ENCODE measurements at regions of chr10 and their contacts with region 1.

Region 1: GRCh38 chr10:79068562-79069324 is at the start of gene ZMIZ1:
- DNase-seq: peak; percentile 77
- H3K4me3 Mint-ChIP-seq: peak within 1 kb of the TSS; percentile 91
- H3K27ac Mint-ChIP-seq: peak within 1 kb of the TSS; percentile 86
- H3K4me1 Mint-ChIP-seq: peaks cover 43% of the 10 kb centered on the region
- H3K27me3 Mint-ChIP-seq: peaks cover 16% of the 10 kb centered on the region
- total RNA-seq, gene ZMIZ1: 67.6 and 67.8 TPM in 2 replicates

Region 2: GRCh38 chr10:78047314-78047891 is 1021.3 kb before region 1 on chr10:
- intact Hi-C with region 1: loop called (anchors 5 kb)
- DNase-seq: peak; percentile 61
- H3K4me3 Mint-ChIP-seq: no peak overlapping the region
- H3K27ac Mint-ChIP-seq: no peak overlapping the region
- H3K4me1 Mint-ChIP-seq: peaks cover 30% of the 10 kb centered on the region
- H3K27me3 Mint-ChIP-seq: no peaks in the 10 kb centered on the region

Region 3: DNA sequence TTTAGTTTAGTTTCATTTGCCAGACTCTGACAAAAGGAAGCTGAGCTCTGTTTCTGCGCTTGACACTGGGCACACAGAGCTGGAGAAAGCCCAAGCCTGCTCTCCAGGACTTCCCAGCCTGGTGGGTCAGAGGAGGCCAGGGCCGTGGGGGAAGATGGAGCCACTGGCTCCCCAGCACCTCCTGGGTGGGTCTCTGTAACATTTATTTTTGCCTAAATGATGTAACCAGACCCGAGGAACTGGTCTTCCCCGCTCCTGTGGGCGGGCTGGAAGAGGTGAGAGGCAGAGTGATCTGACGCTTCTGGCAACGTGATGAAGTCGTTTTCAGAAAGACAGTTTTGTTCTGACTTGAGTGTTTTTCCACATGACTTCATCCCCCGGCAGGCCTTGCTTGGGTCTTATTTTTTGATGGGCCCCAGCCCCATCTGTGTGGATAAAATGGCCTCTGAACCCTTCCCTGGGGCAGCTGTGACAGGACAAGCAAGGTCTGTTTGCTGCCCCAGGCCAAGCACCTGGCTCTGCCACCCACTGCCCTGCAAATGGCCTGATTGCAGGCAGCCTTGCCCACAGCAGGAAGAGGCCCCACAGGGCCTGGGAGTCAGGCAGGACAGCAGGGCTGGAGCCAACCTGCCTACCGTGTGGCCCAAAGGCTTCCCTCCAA is 305.0 kb before region 1 on chr10:
- intact Hi-C with region 1: loop called (anchors 1 kb)
- DNase-seq: no peak
- H3K4me3 Mint-ChIP-seq: peak overlapping the region; percentile 3
- H3K27ac Mint-ChIP-seq: peak overlapping the region; percentile 85
- H3K4me1 Mint-ChIP-seq: peaks cover 27% of the 10 kb centered on the region
- H3K27me3 Mint-ChIP-seq: no peaks in the 10 kb centered on the region

Region 4: GRCh38 chr10:79137826-79138225 is 69.1 kb after region 1 on chr10:
- intact Hi-C with region 1: loop called (anchors 5 kb)
- DNase-seq: peak; percentile 22
- H3K4me3 Mint-ChIP-seq: peak overlapping the region; percentile 19
- H3K27ac Mint-ChIP-seq: peak overlapping the region; percentile 44
- H3K4me1 Mint-ChIP-seq: peaks cover 37% of the 10 kb centered on the region
- H3K27me3 Mint-ChIP-seq: no peaks in the 10 kb centered on the region

Region 5: GRCh38 chr10:79316671-79317431 is 248.1 kb after region 1 on chr10:
- intact Hi-C with region 1: loop called (anchors 1 kb)
- DNase-seq: peak; percentile 34
- H3K4me3 Mint-ChIP-seq: peak overlapping the region; percentile 65
- H3K27ac Mint-ChIP-seq: peak overlapping the region; percentile 95
- H3K4me1 Mint-ChIP-seq: peaks cover 71% of the 10 kb centered on the region
- H3K27me3 Mint-ChIP-seq: no peaks in the 10 kb centered on the region

Measured in activated T-helper 1 cell treated with anti-CD3 and anti-CD28 coated beads, Interleukin-12 subunit alpha, Interleukin-12 subunit beta, Interleukin-2, Interleukin-4 antibody, amounts not matched to agents 30 ng/mL and 10 ng/mL and 1 ng/mL, durations not matched to agents 14 hours and 24 hours and 36 hours (primary cell).